ENCODE measurements at regions of chr1 and their contacts with region 1.

Region 1: GRCh38 chr1:14113841-14114567 is 414.0 kb downstream of the PRDM2 start:
- DNase-seq: no peak
- H3K4me3 ChIP-seq: no peak overlapping the region
- H3K27ac ChIP-seq: no peak overlapping the region
- H3K4me1 ChIP-seq: peaks cover 0 to 14% (median 9%) of the 10 kb centered on the region in 4 donors
- H3K27me3 ChIP-seq: no peaks in the 10 kb centered on the region
- CTCF ChIP-seq: peak; percentile 47 to 68 (median 53)
- EP300 ChIP-seq: no peak
- POLR2A ChIP-seq: no peak

Region 2: DNA sequence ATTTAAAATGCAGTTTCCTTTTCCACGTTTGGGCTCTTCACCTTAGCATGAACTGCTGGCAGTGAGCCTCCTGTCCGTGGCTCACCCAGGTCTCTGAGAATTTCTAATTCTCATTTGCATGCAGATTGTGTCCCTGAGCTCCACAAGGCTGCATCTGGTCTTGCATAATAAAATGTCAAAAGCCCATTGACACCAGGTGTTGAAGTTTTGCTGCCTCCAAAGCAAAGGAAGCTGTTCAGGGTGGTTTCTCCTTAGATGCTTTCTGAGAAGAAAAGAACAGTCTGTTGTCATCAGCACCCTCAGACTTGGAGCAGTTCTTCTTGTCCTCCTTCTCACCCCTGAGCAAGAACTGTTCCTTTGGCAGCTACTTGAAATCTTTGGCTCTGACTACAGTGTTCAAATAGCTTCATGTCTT is 51.4 kb after region 1 on chr1:
- intact Hi-C with region 1: no loop called
- DNase-seq: no peak
- H3K4me3 ChIP-seq: no peak overlapping the region
- H3K27ac ChIP-seq: no peak overlapping the region
- H3K4me1 ChIP-seq: peaks cover 0 to 9% (median 2%) of the 10 kb centered on the region in 4 donors
- H3K27me3 ChIP-seq: no peaks in the 10 kb centered on the region
- CTCF ChIP-seq: no peak
- EP300 ChIP-seq: no peak
- POLR2A ChIP-seq: no peak

Region 3: GRCh38 chr1:14516974-14517840 is 403.2 kb after region 1 on chr1:
- intact Hi-C with region 1: loop called (anchors 10 kb)
- DNase-seq: no peak
- H3K4me3 ChIP-seq: no peak overlapping the region
- H3K27ac ChIP-seq: peak overlapping the region; percentile 66 to 81 (median 76)
- H3K4me1 ChIP-seq: peaks cover 0 to 75% (median 63%) of the 10 kb centered on the region in 4 donors
- H3K27me3 ChIP-seq: no peaks in the 10 kb centered on the region
- CTCF ChIP-seq: no peak
- EP300 ChIP-seq: peak; percentile 1
- POLR2A ChIP-seq: no peak

Region 4: GRCh38 chr1:14733048-14733778 is 619.2 kb after region 1 on chr1:
- intact Hi-C with region 1: loop called (anchors 10 kb)
- DNase-seq: no peak
- H3K4me3 ChIP-seq: no peak overlapping the region
- H3K27ac ChIP-seq: no peak overlapping the region
- H3K4me1 ChIP-seq: peaks cover 0 to 17% (median 0%) of the 10 kb centered on the region in 4 donors
- H3K27me3 ChIP-seq: peaks cover 0 to 17% (median 0%) of the 10 kb centered on the region in 4 donors
- CTCF ChIP-seq: no peak
- EP300 ChIP-seq: no peak
- POLR2A ChIP-seq: no peak

Measured in esophagus muscularis mucosa (tissue), 4 donors.